Activated CD4-positive, alpha-beta T cell treated with anti-CD3 and anti-CD28 coated beads for 36 hours (primary cell): ENCODE measurements at regions of chr1 and their contacts with region 1.

Region 1: GRCh38 chr1:58816072-58816746 is 32.4 kb upstream of the JUN start:
- DNase-seq: peak; percentile 92
- ATAC-seq: peak; percentile 92
- H3K4me3 Mint-ChIP-seq: peak overlapping the region; percentile 77
- H3K27ac Mint-ChIP-seq: peak overlapping the region; percentile 79
- H3K4me1 Mint-ChIP-seq: peaks cover 39% of the 10 kb centered on the region
- H3K27me3 Mint-ChIP-seq: no peaks in the 10 kb centered on the region

Region 2: DNA sequence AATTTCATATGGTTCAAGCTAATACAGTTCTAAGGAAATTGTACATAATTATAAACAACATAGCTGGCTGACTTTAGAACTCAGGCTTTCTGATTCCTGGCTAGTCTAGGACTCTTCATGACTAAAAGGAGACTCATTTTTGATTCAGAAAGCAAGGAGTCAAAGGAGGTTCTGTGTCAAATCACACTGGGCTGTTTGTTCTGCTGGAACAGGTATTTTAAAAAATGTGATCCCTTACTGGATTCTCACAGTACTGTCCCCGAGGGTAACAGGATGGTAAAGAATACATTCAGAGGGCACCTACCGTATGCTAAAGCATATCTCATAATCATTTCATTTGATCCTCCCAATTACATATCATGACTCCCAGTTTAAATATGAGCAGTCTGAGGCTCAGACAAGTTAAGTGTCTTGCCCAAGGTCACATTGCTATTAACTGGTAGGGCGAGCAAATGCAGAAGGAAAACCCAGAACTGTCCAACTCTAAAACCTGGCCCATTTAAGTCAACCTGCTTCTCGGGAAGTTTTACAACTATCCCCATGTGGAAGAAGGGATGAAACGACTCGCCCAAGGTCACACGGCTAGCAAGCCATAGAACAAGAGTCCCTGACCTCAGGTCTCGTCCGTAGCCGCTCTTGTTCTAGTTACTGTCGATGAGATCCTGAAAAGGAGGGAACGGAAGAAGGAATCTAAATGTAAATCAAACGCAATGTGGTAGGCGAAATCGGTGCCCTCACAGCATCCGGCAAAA is 117.0 kb before region 1 on chr1:
- CTCF ChIA-PET with region 1: no interaction called
- POLR2A ChIA-PET with region 1: no interaction called
- intact Hi-C with region 1: loop called in 1 of 2 experiments (anchors 1 kb)
- DNase-seq: no peak
- ATAC-seq: peak; percentile 16
- H3K4me3 Mint-ChIP-seq: peak overlapping the region; percentile 85
- H3K27ac Mint-ChIP-seq: peak overlapping the region; percentile 94
- H3K4me1 Mint-ChIP-seq: peaks cover 11% of the 10 kb centered on the region
- H3K27me3 Mint-ChIP-seq: no peaks in the 10 kb centered on the region

Region 3: DNA sequence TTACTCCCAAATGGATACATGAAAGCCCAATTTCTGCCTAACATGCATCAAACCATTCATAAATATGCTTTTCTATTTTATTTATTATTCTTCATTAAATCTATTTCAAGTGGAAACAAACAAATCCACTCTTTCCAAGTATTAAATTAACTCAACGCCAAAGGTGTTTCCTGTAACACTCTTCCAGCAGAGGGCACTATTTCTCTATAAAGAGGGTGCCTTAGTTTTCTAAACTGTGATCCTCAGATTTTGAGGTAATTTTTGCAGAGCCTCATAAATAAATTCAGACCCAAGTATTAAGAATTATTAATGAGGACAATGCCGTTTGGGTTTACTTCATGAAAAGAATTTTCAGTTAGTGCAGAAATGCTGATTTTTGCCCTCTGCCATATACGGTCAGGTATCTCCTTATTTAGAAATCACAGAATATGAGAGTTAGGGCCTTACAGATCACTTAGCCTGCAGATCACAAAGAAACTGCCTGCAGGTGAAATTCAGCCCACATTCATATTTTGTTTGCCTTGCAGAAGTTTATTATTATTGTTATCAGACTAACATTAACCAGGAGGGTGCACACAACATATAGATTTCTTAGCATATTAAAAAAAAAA is 76.2 kb before region 1 on chr1:
- CTCF ChIA-PET with region 1: no interaction called
- POLR2A ChIA-PET with region 1: no interaction called
- intact Hi-C with region 1: loop called in 1 of 2 experiments (anchors 1 kb)
- DNase-seq: no peak
- ATAC-seq: peak; percentile 44
- H3K4me3 Mint-ChIP-seq: no peak overlapping the region
- H3K27ac Mint-ChIP-seq: no peak overlapping the region
- H3K4me1 Mint-ChIP-seq: no peaks in the 10 kb centered on the region
- H3K27me3 Mint-ChIP-seq: peaks cover 2% of the 10 kb centered on the region

Region 4: DNA sequence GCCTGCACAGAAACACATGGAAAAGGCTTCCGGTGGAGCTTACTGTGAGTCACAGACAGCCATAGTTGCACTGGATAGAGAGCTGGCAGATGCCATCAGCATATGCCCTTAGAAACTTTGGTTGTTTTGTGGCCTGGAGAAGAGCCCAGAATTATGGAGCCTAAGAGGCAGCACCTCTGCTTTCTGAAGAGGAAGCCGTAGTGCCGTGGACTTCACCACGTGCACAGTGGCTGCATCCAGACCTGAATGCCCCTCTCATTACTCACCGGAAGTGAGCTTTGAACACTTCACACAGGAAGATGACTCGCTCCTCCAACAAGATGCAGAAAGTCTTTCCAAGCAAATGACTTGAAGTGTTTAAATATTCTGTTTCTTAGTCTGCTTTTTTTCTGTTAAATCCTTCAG is 60.7 kb before region 1 on chr1:
- CTCF ChIA-PET with region 1: no interaction called
- POLR2A ChIA-PET with region 1: no interaction called
- intact Hi-C with region 1: loop called in 1 of 2 experiments (anchors 2 kb)
- DNase-seq: peak; percentile 82
- ATAC-seq: peak; percentile 96
- H3K4me3 Mint-ChIP-seq: peak overlapping the region; percentile 30
- H3K27ac Mint-ChIP-seq: peak overlapping the region; percentile 84
- H3K4me1 Mint-ChIP-seq: peaks cover 36% of the 10 kb centered on the region
- H3K27me3 Mint-ChIP-seq: no peaks in the 10 kb centered on the region

Region 5: GRCh38 chr1:58857680-58858673 is 41.8 kb after region 1 on chr1:
- CTCF ChIA-PET with region 1: no interaction called
- POLR2A ChIA-PET with region 1: interaction called, 3 read pairs
- intact Hi-C with region 1: loop called in 1 of 2 experiments (anchors 1 kb)
- DNase-seq: peak; percentile 44
- ATAC-seq: peak; percentile 75
- H3K4me3 Mint-ChIP-seq: no peak overlapping the region
- H3K27ac Mint-ChIP-seq: peak overlapping the region; percentile 80
- H3K4me1 Mint-ChIP-seq: peaks cover 38% of the 10 kb centered on the region
- H3K27me3 Mint-ChIP-seq: no peaks in the 10 kb centered on the region

Region 6: DNA sequence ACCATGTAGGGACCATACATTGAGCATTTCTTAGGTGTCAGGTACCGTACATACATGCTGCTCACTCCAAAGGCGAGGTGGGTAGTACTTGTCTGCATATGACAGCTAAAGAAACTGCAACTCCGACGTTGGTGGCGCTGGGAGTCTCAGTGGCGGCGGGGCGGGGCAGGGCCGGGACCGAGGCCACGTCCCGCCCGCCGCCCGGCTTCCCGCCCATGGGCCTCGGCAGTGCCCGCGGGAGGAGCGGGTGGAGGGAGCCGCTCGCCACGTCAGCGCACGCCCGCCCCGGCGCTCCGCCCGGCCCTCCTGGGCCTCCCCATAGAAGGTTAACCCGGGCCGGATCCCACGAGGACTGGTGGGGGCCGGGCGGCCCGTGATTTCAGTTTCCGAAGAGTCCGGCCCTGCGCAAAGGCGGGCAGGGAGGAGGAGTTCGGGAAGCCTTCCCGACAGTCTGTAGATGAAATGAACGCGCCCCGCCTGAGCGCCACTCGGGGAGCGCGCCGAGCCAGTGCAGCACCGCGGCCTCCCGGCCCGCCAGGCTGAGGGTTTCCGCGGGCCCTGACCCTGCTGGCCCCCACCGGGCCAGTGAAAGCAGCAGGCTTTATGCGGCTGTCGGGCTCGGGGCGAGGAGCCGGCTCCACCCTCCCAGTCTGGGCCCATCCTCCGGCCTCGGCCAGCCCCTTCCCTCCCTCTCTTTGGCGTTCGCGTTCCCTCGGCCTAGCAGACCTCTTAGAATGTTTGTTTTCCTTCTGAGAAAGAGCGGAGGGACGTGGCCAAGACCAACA is 87.5 kb after region 1 on chr1:
- CTCF ChIA-PET with region 1: no interaction called
- POLR2A ChIA-PET with region 1: no interaction called
- intact Hi-C with region 1: loop called (anchors 1 to 2 kb)
- DNase-seq: peak; percentile 92
- ATAC-seq: peak; percentile 94
- H3K4me3 Mint-ChIP-seq: peak overlapping the region; percentile 62
- H3K27ac Mint-ChIP-seq: peak overlapping the region; percentile 80
- H3K4me1 Mint-ChIP-seq: peaks cover 15% of the 10 kb centered on the region
- H3K27me3 Mint-ChIP-seq: no peaks in the 10 kb centered on the region